A673 (cell line): ENCODE measurements at regions of chr13 and their contacts with region 1.

Region 1: DNA sequence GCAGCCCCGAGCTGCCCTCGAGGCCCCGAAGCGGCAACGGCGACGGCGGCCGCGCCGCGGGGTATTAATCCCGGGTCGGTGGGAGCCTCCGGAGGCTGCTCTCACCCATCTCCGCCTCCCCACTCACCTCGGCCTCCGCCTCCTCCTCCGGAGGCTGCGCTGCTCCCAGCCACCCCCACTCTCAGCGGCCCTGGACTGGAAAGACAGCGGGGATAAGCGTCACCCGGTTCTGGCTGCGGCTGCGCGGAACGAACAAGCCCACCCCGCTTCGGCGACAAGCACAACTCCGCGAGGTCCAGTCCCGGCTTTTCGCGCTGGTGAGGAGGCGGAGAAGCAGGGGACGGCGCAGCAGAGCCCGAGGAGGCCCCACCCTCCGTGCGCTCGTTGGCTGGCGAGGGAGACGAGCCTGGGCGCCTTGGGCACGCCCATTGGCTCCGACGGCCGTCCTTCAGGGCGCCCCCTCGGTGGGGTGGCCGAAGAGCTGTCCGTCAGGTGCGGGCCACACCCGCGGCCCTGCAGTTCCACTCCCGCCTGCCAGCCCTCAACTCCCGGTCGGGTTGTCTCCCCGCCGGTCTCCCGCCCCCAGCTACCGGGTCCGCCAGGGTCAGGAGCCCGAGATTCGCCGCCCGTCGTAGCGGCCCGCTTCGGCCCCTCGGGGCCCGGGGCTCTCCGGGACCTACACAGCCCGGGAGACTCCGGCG is at the start of gene ZMYM5:
- DNase-seq: peak; percentile 100
- H3K4me3 ChIP-seq: peak within 1 kb of the TSS; percentile 82
- H3K27ac ChIP-seq: peak within 1 kb of the TSS; percentile 95
- H3K4me1 ChIP-seq: peaks cover 17% of the 10 kb centered on the region
- H3K27me3 ChIP-seq: no peaks in the 10 kb centered on the region
- CTCF ChIP-seq: no peak
- total RNA-seq, gene ZMYM5: 15.3 and 17.4 TPM in 2 replicates

Region 2: GRCh38 chr13:19061999-19062646 is 801.4 kb before region 1 on chr13:
- CTCF ChIA-PET with region 1: no interaction called
- POLR2A ChIA-PET with region 1: no interaction called
- intact Hi-C with region 1: no loop called
- DNase-seq: no peak
- H3K4me3 ChIP-seq: no peak overlapping the region
- H3K27ac ChIP-seq: no peak overlapping the region
- H3K4me1 ChIP-seq: no peaks in the 10 kb centered on the region
- H3K27me3 ChIP-seq: no peaks in the 10 kb centered on the region
- CTCF ChIP-seq: no peak

Region 3: DNA sequence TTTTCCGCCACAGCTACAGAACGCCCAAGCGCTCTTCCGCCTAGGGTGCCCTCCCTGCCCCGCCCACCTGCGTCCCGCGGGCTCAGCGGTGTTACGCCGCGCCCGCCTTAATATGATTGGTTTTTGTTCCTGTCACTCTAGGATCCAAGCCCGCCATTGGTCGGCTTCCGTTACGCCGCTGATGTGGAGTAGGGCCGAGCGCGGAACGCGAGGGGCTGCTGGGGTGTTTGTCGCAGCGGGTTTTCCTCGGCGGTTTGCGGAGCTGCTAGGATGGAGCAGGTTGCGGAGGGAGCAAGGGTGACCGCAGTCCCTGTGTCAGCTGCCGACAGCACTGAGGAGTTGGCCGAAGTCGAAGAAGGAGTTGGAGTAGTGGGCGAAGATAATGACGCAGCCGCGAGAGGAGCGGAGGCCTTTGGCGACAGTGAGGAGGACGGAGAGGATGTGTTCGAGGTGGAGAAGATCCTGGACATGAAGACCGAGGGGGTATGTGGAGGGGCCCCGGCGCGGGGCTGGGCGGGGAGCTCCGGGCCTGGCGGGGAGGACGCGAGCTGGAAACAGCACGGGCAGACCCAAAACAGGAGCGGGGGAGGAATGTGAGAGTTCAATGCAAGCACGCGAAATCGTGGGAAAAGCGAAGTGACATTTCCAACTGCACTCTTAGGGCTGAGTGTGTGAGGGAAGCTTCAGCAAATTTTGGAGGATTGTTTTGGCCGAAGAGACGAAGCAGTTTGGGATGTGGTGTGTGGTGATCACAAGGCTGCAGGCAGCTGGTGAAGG is 229.8 kb before region 1 on chr13 and contains the start of gene MPHOSPH8:
- CTCF ChIA-PET with region 1: no interaction called
- POLR2A ChIA-PET with region 1: no interaction called
- intact Hi-C with region 1: loop called (anchors 10 kb)
- DNase-seq: peak; percentile 97
- H3K4me3 ChIP-seq: peak within 1 kb of the TSS; percentile 83
- H3K27ac ChIP-seq: peak within 1 kb of the TSS; percentile 81
- H3K4me1 ChIP-seq: peaks cover 6% of the 10 kb centered on the region
- H3K27me3 ChIP-seq: no peaks in the 10 kb centered on the region
- CTCF ChIP-seq: no peak
- total RNA-seq, gene MPHOSPH8: 29.1 and 32.3 TPM in 2 replicates

Region 4: GRCh38 chr13:19782049-19782726 is 81.3 kb before region 1 on chr13:
- CTCF ChIA-PET with region 1: no interaction called
- POLR2A ChIA-PET with region 1: no interaction called
- intact Hi-C with region 1: loop called (anchors 2 kb)
- DNase-seq: peak; percentile 29
- H3K4me3 ChIP-seq: peak overlapping the region; percentile 67
- H3K27ac ChIP-seq: peak overlapping the region; percentile 91
- H3K4me1 ChIP-seq: no peaks in the 10 kb centered on the region
- H3K27me3 ChIP-seq: no peaks in the 10 kb centered on the region
- CTCF ChIP-seq: no peak

Region 5: GRCh38 chr13:19838865-19839275 is 24.6 kb before region 1 on chr13:
- CTCF ChIA-PET with region 1: no interaction called
- POLR2A ChIA-PET with region 1: interaction called, 10 read pairs
- intact Hi-C with region 1: no loop called
- DNase-seq: no peak
- H3K4me3 ChIP-seq: no peak overlapping the region
- H3K27ac ChIP-seq: no peak overlapping the region
- H3K4me1 ChIP-seq: no peaks in the 10 kb centered on the region
- H3K27me3 ChIP-seq: no peaks in the 10 kb centered on the region
- CTCF ChIP-seq: no peak

Region 6: GRCh38 chr13:19852766-19853165 is 10.7 kb before region 1 on chr13:
- CTCF ChIA-PET with region 1: no interaction called
- POLR2A ChIA-PET with region 1: interaction called, 18 read pairs
- intact Hi-C with region 1: no loop called
- DNase-seq: no peak
- H3K4me3 ChIP-seq: no peak overlapping the region
- H3K27ac ChIP-seq: no peak overlapping the region
- H3K4me1 ChIP-seq: no peaks in the 10 kb centered on the region
- H3K27me3 ChIP-seq: no peaks in the 10 kb centered on the region
- CTCF ChIP-seq: no peak

Region 7: DNA sequence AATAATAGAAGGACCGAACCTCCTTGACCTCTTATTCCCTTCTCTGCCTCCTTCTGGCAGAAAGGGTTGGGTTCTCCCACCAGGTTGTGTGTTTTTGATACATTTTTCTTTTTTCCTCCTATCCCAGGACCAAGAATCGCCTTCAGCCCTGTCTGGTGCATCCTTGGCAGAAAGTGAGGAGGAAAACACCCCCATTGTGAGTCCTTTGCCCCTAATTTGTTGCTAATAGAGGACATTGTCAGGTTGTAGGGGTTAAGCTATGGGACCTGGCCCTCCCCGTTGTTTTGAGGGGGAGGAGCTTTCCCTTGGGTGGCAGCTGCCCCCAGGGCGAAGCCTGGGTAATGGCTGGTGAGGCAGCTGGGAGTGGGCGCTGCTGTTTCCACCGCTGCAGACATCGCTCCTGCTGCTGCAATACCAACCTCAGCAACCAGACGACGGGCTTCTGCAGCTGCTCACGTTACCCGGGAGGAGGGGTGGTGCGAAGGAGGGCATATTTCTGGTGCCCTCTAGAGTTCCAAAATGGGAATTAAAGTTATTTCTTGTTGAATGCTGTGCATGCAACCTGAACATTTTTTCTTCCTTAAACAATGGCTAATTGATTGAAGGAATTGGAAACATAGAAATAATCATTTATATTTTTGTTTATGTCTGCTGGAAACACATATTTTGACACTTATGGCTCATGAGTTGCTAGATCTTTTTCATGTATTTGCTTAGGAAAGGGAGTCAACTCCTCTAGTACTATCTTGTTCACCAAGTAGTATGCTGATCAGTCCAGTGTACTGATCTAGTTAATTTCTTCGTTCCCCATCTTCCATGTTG is 96.6 kb after region 1 on chr13:
- CTCF ChIA-PET with region 1: no interaction called
- POLR2A ChIA-PET with region 1: no interaction called
- intact Hi-C with region 1: loop called (anchors 5 kb)
- DNase-seq: peak; percentile 97
- H3K4me3 ChIP-seq: peak overlapping the region; percentile 77
- H3K27ac ChIP-seq: peak overlapping the region; percentile 97
- H3K4me1 ChIP-seq: peaks cover 23% of the 10 kb centered on the region
- H3K27me3 ChIP-seq: no peaks in the 10 kb centered on the region
- CTCF ChIP-seq: peak; percentile 88